WTC11 (cell line): ENCODE measurements at regions of chr5 and their contacts with region 1.

Region 1: DNA sequence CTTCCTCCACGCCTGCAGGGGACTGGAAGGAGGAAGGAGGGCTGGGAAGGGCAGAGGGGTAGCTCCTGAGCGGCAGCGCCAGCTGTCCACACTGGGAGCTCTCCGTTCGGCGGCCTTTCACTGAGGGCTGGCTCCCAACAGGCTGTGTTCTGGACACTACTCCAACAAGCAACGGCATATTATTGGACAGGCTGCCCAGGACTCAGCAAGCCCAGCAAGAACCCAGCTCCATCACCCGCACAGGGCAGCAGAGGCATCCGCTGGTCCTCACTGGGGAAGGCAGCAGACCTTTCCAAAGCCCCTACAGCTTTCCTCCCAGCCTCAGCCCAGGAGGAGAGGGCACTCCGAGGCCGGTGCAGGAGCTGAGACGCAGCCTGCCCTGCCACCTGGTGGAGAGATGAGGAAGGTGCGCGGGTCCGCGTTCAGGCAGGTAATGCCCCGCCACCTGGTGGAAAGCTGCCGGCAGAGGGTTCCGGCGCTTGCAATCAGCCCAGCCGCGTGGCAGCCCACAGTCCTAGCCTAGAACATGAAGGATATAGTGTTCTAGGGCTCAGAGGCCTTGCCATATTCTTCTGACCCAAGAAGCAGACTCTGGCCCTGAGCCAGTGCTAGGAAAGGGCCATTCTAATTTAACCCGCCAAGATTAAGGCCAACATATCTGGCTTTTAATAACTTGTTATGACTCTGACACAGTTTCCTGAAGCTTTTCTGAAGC is 74.4 kb downstream of the NRG2 start:
- DNase-seq: peak; percentile 97
- ATAC-seq: peak; percentile 98
- H3K4me3 Mint-ChIP-seq: no peak overlapping the region
- H3K27ac Mint-ChIP-seq: no peak overlapping the region
- H3K4me1 Mint-ChIP-seq: no peaks in the 10 kb centered on the region
- H3K27me3 Mint-ChIP-seq: peaks cover 15% of the 10 kb centered on the region
- CTCF ChIP-seq: peak; percentile 98

Region 2: GRCh38 chr5:139765409-139766217 is 203.1 kb before region 1 on chr5:
- CTCF ChIA-PET with region 1: interaction called, 18 read pairs
- POLR2A ChIA-PET with region 1: no interaction called
- DNase-seq: peak; percentile 84
- ATAC-seq: peak; percentile 84
- H3K4me3 Mint-ChIP-seq: peak overlapping the region; percentile 61
- H3K27ac Mint-ChIP-seq: no peak overlapping the region
- H3K4me1 Mint-ChIP-seq: peaks cover 42% of the 10 kb centered on the region
- H3K27me3 Mint-ChIP-seq: peaks cover 52% of the 10 kb centered on the region
- CTCF ChIP-seq: peak; percentile 97

Region 3: GRCh38 chr5:139806726-139807646 is 161.7 kb before region 1 on chr5:
- CTCF ChIA-PET with region 1: interaction called, 13 read pairs
- POLR2A ChIA-PET with region 1: no interaction called
- DNase-seq: no peak
- ATAC-seq: no peak
- H3K4me3 Mint-ChIP-seq: no peak overlapping the region
- H3K27ac Mint-ChIP-seq: no peak overlapping the region
- H3K4me1 Mint-ChIP-seq: no peaks in the 10 kb centered on the region
- H3K27me3 Mint-ChIP-seq: peaks cover 8% of the 10 kb centered on the region
- CTCF ChIP-seq: no peak

Region 4: DNA sequence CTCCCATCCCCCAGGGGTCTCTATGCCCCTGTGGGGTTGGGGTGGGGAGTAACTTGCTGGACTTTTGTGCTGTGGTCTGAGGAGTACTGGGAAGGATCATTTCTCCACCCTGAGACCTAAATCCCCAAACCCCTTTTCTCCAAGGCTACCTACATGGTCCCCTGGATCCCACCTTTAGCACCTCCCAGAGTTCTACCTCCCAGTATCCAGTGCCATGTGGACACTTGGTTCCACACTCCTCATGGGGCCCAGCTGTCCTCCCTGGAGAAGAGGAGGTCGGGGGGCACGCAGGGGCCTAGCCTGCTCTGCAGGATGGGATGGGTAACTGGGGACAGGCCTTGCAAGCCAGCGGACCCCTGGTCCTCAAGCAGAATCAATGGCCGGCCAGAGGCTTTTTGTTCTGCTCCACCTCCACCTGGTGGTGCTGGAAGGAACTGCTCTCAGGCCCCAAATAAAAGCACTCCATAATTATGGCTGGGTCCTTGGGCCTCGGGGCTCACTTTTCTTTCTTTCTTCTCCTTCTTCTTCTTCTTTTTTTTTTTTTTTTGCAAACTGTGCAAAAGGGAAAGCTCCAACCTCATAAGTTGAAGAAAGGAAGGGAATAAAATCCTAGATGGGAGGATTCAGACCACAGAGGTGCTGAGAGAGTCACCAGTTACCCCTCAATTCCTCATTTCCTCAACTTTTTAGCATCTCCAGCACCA is 104.7 kb before region 1 on chr5:
- CTCF ChIA-PET with region 1: interaction called, 70 read pairs
- POLR2A ChIA-PET with region 1: interaction called, 4 read pairs
- DNase-seq: peak; percentile 81
- ATAC-seq: peak; percentile 84
- H3K4me3 Mint-ChIP-seq: no peak overlapping the region
- H3K27ac Mint-ChIP-seq: no peak overlapping the region
- H3K4me1 Mint-ChIP-seq: peaks cover 12% of the 10 kb centered on the region
- H3K27me3 Mint-ChIP-seq: peaks cover 6% of the 10 kb centered on the region
- CTCF ChIP-seq: peak; percentile 89

Region 5: DNA sequence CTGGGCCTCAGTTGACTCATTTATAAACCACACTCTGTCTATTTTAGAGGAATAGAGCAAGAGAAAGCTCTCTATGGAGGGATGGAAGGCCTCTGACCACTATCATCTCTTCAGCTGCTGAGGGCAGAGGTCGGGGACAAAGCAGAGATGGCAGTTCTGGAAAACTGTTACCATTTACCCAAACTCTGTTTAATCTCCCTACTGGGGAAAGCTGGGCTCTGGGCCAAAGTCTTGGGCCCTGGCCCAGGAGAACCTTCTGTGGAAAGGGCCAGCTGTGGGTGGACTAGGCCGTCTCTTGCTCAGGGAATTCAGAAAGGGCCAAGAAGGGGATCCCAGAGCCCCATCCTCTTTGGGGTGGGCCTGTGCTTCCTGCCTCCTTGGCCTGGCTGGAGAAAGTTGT is 73.1 kb before region 1 on chr5:
- CTCF ChIA-PET with region 1: interaction called, 53 read pairs
- POLR2A ChIA-PET with region 1: no interaction called
- DNase-seq: no peak
- ATAC-seq: no peak
- H3K4me3 Mint-ChIP-seq: no peak overlapping the region
- H3K27ac Mint-ChIP-seq: no peak overlapping the region
- H3K4me1 Mint-ChIP-seq: no peaks in the 10 kb centered on the region
- H3K27me3 Mint-ChIP-seq: peaks cover 46% of the 10 kb centered on the region
- CTCF ChIP-seq: no peak

Region 6: GRCh38 chr5:139925650-139926640 is 42.8 kb before region 1 on chr5:
- CTCF ChIA-PET with region 1: interaction called, 12 read pairs
- POLR2A ChIA-PET with region 1: no interaction called
- DNase-seq: no peak
- ATAC-seq: no peak
- H3K4me3 Mint-ChIP-seq: no peak overlapping the region
- H3K27ac Mint-ChIP-seq: no peak overlapping the region
- H3K4me1 Mint-ChIP-seq: no peaks in the 10 kb centered on the region
- H3K27me3 Mint-ChIP-seq: peaks cover 12% of the 10 kb centered on the region
- CTCF ChIP-seq: no peak

Region 7: GRCh38 chr5:140007311-140007710 is 38.6 kb after region 1 on chr5:
- CTCF ChIA-PET with region 1: interaction called, 17 read pairs
- POLR2A ChIA-PET with region 1: no interaction called
- DNase-seq: no peak
- ATAC-seq: no peak
- H3K4me3 Mint-ChIP-seq: no peak overlapping the region
- H3K27ac Mint-ChIP-seq: no peak overlapping the region
- H3K4me1 Mint-ChIP-seq: peaks cover 9% of the 10 kb centered on the region
- H3K27me3 Mint-ChIP-seq: peaks cover 34% of the 10 kb centered on the region
- CTCF ChIP-seq: no peak

Region 8: DNA sequence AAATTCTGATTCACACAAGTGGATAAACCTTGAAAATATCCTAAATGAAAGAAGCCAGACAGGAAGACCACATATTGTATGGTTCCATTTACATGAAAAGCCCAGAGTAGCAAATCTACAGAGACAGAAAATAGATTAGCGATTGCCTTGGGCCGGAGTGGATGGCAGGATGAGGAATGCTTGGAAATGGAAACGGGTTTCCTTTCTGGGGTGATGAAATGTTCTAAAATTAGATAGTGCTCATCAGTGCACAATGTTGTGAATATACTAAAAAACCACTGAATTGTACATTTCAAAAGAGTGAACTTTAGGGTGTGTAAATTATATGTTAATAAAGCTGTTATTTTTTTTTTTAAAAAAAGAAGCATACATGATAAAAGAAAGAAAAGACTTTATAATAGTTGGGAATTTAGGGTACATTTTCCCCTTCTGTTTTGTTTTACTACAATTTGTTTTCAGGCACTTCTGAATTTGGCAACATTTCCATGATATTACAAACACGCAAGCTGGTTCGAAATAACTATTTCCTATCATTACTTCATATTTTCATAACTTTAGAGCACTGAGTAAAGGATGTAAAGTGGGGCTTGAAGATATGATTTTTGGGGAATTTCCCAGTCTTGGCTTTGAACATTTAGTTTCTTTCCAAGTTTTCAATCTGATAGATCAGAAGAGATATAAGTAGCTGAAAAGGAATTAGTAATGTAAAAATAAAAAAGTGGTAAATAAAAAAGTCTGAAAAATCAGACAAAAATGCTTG is 619.8 kb after region 1 on chr5:
- CTCF ChIA-PET with region 1: no interaction called
- POLR2A ChIA-PET with region 1: no interaction called
- DNase-seq: no peak
- ATAC-seq: no peak
- H3K4me3 Mint-ChIP-seq: no peak overlapping the region
- H3K27ac Mint-ChIP-seq: no peak overlapping the region
- H3K4me1 Mint-ChIP-seq: peaks cover 5% of the 10 kb centered on the region
- H3K27me3 Mint-ChIP-seq: peaks cover 15% of the 10 kb centered on the region
- CTCF ChIP-seq: no peak